ENCODE measurements at regions of chr15 and their contacts with region 1.

Region 1: DNA sequence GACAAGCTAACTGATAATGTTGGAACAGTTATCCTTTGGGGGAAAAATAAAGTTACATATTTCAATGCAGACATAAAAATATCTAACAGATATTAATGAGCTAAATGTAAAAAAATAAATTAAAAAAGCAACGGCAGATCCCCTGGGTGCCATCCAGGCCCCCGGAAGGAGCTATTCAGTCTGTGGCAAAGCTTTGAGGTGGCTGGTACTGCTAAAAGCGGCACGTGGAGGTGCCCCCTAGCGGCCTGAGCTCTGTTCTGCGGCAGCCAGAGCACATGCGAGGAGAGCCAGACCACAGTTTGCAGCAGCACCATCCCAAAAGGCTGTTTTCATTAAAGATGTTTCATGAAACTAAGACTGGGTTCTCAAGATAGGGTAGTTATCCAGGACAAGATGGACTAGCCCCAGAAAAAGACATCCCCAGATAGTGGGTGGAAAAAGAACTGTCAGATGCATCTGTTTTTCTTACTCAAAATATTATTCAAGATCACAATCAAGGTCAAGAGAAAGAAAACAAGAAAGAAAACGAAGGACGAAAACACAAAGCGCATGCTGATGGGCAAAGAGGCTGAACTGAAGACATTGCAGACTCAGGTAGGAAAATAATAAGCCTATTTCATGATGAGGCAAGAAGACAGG is 18.7 kb downstream of the AP3S2 start:
- DNase-seq: peak; percentile 79

Region 2: GRCh38 chr15:89750560-89751542 is 124.2 kb before region 1 on chr15 and contains the start of gene MESP1:
- in situ Hi-C with region 1: loop called (anchors 25 kb)
- DNase-seq: peak; percentile 90
- total RNA-seq, gene MESP1: 0.74 and 0.88 TPM in 2 replicates

Region 3: DNA sequence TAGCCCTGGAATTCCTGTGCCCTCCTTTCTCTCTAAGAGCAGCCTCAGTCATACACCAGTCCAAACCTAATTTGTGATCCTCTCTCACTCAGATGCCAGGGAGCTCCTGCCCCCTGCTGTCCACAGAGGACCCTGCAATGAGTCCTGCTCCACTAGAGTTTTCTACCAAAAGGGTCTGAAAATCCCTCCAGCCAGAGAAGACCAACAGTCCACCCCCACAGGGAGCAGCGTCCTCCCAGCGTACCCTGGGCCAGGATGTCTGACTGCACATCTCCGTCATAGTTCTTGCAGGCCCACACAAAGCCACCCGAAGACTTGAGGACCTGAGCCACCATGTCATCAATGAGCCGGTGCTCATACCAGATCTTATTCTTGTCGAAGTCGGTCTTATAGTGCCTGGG is 211.8 kb after region 1 on chr15:
- in situ Hi-C with region 1: loop called (anchors 10 kb)
- DNase-seq: peak; percentile 77

Measured in SK-MEL-5 (cell line).